CD8-positive, alpha-beta T cell (primary cell): ENCODE measurements at regions of chr10 and their contacts with region 1.

Region 1: GRCh38 chr10:124719213-124719851 is 24.8 kb downstream of the FAM53B start:
- DNase-seq: peak; percentile 44 to 92 (median 74)
- ATAC-seq: peak; percentile 49
- H3K4me3 ChIP-seq: peak overlapping the region; percentile 17 to 19
- H3K4me3 Mint-ChIP-seq: peak overlapping the region; percentile 80
- H3K27ac ChIP-seq: peak overlapping the region; percentile 59 to 90
- H3K27ac Mint-ChIP-seq: peak overlapping the region; percentile 99
- H3K4me1 ChIP-seq: peaks cover 93% of the 10 kb centered on the region
- H3K4me1 Mint-ChIP-seq: peaks cover 91% of the 10 kb centered on the region
- H3K27me3 ChIP-seq: no peaks in the 10 kb centered on the region
- H3K27me3 Mint-ChIP-seq: no peaks in the 10 kb centered on the region
- CTCF ChIP-seq: peak; percentile 59

Region 2: DNA sequence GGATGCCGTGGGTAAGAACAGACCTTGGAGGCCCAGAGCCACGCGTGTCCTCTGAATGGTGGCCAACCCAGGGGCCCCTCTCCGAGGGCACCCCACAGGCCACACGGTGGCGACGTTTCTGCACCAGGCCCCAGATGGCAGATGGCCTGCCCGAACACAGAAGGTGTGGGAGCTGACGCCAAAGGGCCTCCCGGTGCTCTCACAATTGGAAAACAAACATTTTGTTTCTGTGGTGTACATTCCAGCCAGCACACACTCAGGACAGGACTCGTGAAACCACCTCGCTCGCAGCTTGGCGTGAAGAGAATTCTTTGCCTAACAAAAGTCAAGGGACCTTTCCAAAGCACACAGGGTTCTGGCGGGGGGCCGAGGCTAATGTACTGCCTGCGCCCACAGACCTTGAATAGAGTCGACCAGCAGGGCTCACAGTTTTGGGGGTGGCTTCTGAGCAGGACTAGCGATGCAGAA is 87.2 kb before region 1 on chr10:
- CTCF ChIA-PET with region 1: interaction called, 48 read pairs
- POLR2A ChIA-PET with region 1: interaction called, 7 read pairs
- intact Hi-C with region 1: loop called in 1 of 2 experiments (anchors 1 kb)
- DNase-seq: peak in 6 of 9 experiments; percentile 43 to 73 (median 62)
- ATAC-seq: peak; percentile 30
- H3K4me3 ChIP-seq: no peak overlapping the region
- H3K4me3 Mint-ChIP-seq: no peak overlapping the region
- H3K27ac ChIP-seq: peak overlapping the region in 1 of 2 experiments; percentile 26
- H3K27ac Mint-ChIP-seq: peak overlapping the region; percentile 45
- H3K4me1 ChIP-seq: peaks cover 53% of the 10 kb centered on the region
- H3K4me1 Mint-ChIP-seq: peaks cover 64% of the 10 kb centered on the region
- H3K27me3 ChIP-seq: no peaks in the 10 kb centered on the region
- H3K27me3 Mint-ChIP-seq: no peaks in the 10 kb centered on the region
- CTCF ChIP-seq: peak; percentile 42

Region 3: DNA sequence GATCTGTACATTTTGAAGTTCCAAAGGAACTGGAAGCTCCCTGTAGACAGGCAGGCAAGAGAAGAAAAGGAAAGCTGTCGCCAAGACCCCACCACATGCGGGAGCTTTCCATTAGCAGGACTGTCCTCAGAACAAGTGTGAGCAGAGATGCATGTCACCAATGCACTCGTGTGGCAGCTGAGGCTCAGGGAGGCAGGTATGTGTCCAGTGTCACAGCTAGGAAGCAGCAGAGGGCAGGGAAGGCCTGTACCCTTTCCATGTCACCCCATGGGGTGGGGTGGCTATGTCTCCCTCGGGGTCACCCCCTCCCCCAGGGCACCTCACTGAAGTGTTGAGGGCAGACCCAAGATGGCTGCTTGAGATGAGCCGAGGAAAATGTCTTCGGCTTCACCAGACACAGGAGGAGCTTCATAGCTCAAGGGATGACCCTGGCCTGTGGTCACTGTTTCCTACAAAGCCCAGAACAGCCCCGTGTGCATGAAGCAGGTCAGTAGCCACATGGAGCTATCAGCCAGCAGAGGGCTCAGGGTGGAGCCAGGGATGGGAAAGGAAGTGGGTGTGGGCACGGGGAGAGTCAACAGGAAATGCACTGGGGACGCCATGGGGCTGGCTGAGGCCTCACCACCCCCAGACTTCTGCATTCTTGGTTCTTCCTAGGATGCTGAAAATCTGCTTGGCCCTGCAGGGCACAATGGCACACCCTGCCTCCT is 71.8 kb before region 1 on chr10:
- CTCF ChIA-PET with region 1: interaction called, 60 read pairs
- POLR2A ChIA-PET with region 1: interaction called, 52 read pairs
- intact Hi-C with region 1: loop called (anchors 1 to 2 kb)
- DNase-seq: peak; percentile 44 to 90 (median 80)
- ATAC-seq: peak; percentile 54
- H3K4me3 ChIP-seq: peak overlapping the region; percentile 11 to 14
- H3K4me3 Mint-ChIP-seq: peak overlapping the region; percentile 74
- H3K27ac ChIP-seq: peak overlapping the region; percentile 65 to 93
- H3K27ac Mint-ChIP-seq: peak overlapping the region; percentile 94
- H3K4me1 ChIP-seq: peaks cover 84% of the 10 kb centered on the region
- H3K4me1 Mint-ChIP-seq: peaks cover 80% of the 10 kb centered on the region
- H3K27me3 ChIP-seq: no peaks in the 10 kb centered on the region
- H3K27me3 Mint-ChIP-seq: no peaks in the 10 kb centered on the region
- CTCF ChIP-seq: peak; percentile 30

Region 4: DNA sequence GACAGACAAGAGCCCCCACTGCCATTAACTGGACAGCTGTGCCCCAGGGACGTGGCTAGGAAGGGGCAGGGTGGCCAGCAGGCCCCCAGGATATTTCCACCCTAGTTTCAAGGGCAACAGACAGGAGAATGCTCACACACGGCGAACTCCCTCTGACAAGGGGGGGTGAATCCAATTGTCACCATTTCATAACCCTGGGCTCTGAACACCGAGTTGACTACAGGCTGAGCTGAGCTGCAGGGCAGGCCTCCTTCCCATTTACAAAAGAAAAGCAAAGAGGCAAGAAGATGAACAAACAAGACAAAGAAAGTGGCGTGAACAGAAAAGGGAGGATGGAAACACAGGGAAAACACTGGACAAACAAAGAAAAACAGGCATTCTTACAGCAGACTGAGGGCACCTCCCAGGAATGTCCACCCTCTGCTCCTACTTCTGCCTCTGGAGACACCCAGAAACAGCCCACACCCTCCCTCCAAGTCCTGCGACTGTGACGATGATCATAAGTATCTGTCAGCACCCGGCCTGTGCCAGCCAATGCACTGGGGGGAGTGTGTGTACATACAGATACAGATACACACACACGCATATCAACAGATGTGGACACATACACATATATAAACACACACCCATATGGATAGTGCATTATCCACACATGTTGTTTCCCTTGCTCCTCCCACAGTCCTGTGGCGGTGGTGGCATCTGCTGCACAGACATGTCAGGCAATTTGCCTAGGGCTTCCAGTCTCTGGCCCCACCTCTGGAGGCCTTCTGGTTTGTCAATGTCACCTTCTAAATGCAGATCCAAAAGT is 41.4 kb before region 1 on chr10:
- CTCF ChIA-PET with region 1: interaction called, 33 read pairs
- POLR2A ChIA-PET with region 1: interaction called, 17 read pairs
- intact Hi-C with region 1: loop called in 1 of 2 experiments (anchors 2 kb)
- DNase-seq: peak in 1 of 9 experiments; percentile 41
- ATAC-seq: peak; percentile 26
- H3K4me3 ChIP-seq: peak overlapping the region; percentile 27 to 40
- H3K4me3 Mint-ChIP-seq: peak overlapping the region; percentile 76
- H3K27ac ChIP-seq: peak overlapping the region in 1 of 2 experiments; percentile 57
- H3K27ac Mint-ChIP-seq: peak overlapping the region; percentile 91
- H3K4me1 ChIP-seq: peaks cover 86% of the 10 kb centered on the region
- H3K4me1 Mint-ChIP-seq: peaks cover 86% of the 10 kb centered on the region
- H3K27me3 ChIP-seq: no peaks in the 10 kb centered on the region
- H3K27me3 Mint-ChIP-seq: no peaks in the 10 kb centered on the region
- CTCF ChIP-seq: no peak

Region 5: DNA sequence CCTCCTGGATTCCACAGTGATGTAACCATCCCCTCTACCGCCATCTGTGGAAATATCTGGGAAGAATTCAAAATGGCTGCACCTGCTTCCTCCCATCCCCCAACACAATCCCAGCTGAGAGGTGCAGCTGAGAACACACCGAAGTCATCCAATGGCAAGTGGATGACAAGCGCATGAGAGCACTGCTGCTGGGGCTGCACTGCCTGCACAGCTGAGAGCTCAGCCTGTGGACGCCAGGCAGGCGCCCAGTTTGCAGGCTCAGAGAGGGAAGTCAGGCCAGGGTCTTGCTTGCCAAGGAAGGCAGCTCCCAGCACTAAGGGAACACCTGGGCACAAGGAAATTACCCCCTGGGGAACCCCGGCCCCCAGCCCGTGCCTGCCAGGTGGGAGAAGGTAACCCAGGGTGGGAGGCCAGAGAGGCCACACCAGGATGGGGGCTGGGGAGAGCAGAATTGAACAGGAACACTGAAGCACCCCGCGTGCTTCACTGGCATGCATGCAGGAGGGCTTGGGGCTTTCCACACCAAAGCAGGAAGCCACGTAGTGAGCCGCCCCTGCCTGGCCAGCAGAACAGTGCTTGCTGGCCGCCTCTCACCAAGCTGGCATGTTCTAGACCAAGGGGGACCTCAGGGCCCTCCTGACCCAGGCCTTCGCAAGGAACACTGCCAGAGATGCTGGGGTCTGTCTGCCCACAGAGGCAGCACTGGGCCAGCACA is 21.3 kb before region 1 on chr10:
- CTCF ChIA-PET with region 1: interaction called, 115 read pairs
- POLR2A ChIA-PET with region 1: interaction called, 43 read pairs
- intact Hi-C with region 1: loop called (anchors 1 kb)
- DNase-seq: peak in 6 of 9 experiments; percentile 20 to 84 (median 49)
- ATAC-seq: peak; percentile 37
- H3K4me3 ChIP-seq: no peak overlapping the region
- H3K4me3 Mint-ChIP-seq: peak overlapping the region; percentile 56
- H3K27ac ChIP-seq: peak overlapping the region; percentile 0 to 85
- H3K27ac Mint-ChIP-seq: peak overlapping the region; percentile 87
- H3K4me1 ChIP-seq: peaks cover 76% of the 10 kb centered on the region
- H3K4me1 Mint-ChIP-seq: peaks cover 91% of the 10 kb centered on the region
- H3K27me3 ChIP-seq: no peaks in the 10 kb centered on the region
- H3K27me3 Mint-ChIP-seq: no peaks in the 10 kb centered on the region
- CTCF ChIP-seq: no peak

Region 6: GRCh38 chr10:124732931-124733570 is 13.7 kb after region 1 on chr10:
- CTCF ChIA-PET with region 1: interaction called, 31 read pairs
- POLR2A ChIA-PET with region 1: interaction called, 67 read pairs
- intact Hi-C with region 1: loop called in 1 of 2 experiments (anchors 2 kb)
- DNase-seq: peak in 6 of 9 experiments; percentile 52 to 72 (median 55)
- ATAC-seq: peak; percentile 48
- H3K4me3 ChIP-seq: peak overlapping the region in 1 of 2 experiments; percentile 21
- H3K4me3 Mint-ChIP-seq: peak overlapping the region; percentile 63
- H3K27ac ChIP-seq: peak overlapping the region; percentile 16 to 75
- H3K27ac Mint-ChIP-seq: peak overlapping the region; percentile 84
- H3K4me1 ChIP-seq: peaks cover 88% of the 10 kb centered on the region
- H3K4me1 Mint-ChIP-seq: peaks cover 94% of the 10 kb centered on the region
- H3K27me3 ChIP-seq: no peaks in the 10 kb centered on the region
- H3K27me3 Mint-ChIP-seq: no peaks in the 10 kb centered on the region
- CTCF ChIP-seq: no peak

Region 7: DNA sequence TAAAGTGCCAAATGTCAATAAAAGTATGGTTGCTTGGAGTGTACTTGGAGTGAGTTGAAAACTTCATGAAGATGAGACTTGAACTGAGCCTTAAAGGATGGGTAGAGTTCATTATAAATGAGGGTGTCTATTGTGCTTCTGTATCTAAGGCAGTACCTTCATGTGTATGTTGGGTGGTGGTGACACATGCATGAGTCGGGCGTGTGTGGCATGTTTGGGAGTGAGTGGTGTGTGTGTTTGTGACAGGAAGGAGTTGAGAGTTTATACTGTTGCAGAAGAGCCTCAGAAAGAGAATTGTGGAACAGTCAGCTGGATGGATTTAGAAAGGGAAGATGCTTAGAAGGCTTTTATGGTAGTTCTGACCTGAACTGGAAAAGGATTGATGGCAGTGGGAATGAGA is 216.6 kb after region 1 on chr10:
- CTCF ChIA-PET with region 1: no interaction called
- POLR2A ChIA-PET with region 1: no interaction called
- intact Hi-C with region 1: no loop called
- DNase-seq: no peak
- ATAC-seq: no peak
- H3K4me3 ChIP-seq: no peak overlapping the region
- H3K4me3 Mint-ChIP-seq: no peak overlapping the region
- H3K27ac ChIP-seq: no peak overlapping the region
- H3K27ac Mint-ChIP-seq: peak overlapping the region; percentile 3
- H3K4me1 ChIP-seq: peaks cover 17% of the 10 kb centered on the region
- H3K4me1 Mint-ChIP-seq: peaks cover 62% of the 10 kb centered on the region
- H3K27me3 ChIP-seq: no peaks in the 10 kb centered on the region
- H3K27me3 Mint-ChIP-seq: no peaks in the 10 kb centered on the region
- CTCF ChIP-seq: no peak